ENCODE measurements at regions of chr10 and their contacts with region 1.

Region 1: GRCh38 chr10:117442944-117443685 is 67.9 kb upstream of the PDZD8 start:
- DNase-seq: peak; percentile 74 to 97
- H3K4me3 ChIP-seq: peak overlapping the region in 1 of 2 donors; percentile 2
- H3K27ac ChIP-seq: peak overlapping the region; percentile 84
- H3K4me1 ChIP-seq: peaks cover 0 to 20% of the 10 kb centered on the region in 2 donors
- H3K27me3 ChIP-seq: no peaks in the 10 kb centered on the region
- CTCF ChIP-seq: peak; percentile 84 to 93 (median 89)

Region 2: DNA sequence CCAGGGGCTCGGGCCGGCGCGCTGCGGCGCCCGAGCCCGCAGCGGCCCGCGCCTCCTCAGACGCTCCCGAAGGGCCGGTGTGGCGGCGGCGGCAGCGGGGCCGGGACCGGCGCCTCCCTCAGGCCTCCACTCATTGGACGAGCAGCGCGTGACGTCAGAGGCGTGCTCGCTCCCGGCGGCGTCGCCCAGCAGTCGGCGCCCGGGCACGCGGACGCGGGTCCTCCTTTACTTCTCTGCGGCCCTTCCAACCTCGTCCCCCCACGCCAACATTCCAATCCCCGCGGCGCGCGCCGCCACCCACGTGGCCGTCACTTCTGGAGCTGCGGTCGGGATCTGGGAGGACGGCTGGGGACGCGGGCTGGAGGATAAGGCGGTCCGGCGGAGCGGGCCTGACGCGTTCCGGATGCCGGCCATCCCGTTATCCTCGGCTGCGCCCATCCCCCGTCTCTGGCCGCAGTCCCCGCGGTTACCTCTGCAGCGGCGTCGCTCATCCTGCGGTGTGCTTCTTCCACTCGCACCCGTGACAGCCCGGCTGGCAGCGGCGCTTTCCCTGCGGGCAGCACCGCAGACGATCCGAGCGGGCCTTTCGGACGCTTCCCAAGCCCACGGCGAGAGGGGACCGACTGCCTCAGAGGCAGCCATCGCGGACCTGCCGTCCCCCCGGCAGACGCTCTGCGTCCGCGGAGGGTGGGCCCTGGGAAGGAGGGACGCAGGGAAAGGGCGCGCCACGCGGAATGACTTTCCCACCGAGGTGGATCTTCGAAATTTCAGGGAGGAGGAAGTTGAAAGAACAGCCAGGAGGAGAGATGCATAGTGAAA is 67.5 kb before region 1 on chr10 and contains the start of gene PDZD8:
- intact Hi-C with region 1: loop called (anchors 1 kb)
- DNase-seq: peak; percentile 68 to 96
- H3K4me3 ChIP-seq: peak within 1 kb of the TSS; percentile 92 to 96
- H3K27ac ChIP-seq: peak within 1 kb of the TSS; percentile 96 to 97
- H3K4me1 ChIP-seq: peaks cover 0 to 13% of the 10 kb centered on the region in 2 donors
- H3K27me3 ChIP-seq: no peaks in the 10 kb centered on the region
- CTCF ChIP-seq: no peak
- total RNA-seq, gene PDZD8: 21.0 TPM

Region 3: GRCh38 chr10:117477961-117478670 is 35.0 kb after region 1 on chr10:
- intact Hi-C with region 1: loop called (anchors 2 kb)
- DNase-seq: no peak
- H3K4me3 ChIP-seq: no peak overlapping the region
- H3K27ac ChIP-seq: peak overlapping the region; percentile 55 to 82
- H3K4me1 ChIP-seq: peaks cover 0 to 10% of the 10 kb centered on the region in 2 donors
- H3K27me3 ChIP-seq: no peaks in the 10 kb centered on the region
- CTCF ChIP-seq: peak in 1 of 3 experiments; percentile 7

Region 4: GRCh38 chr10:117541909-117542705 is 99.0 kb after region 1 on chr10:
- intact Hi-C with region 1: loop called (anchors 2 kb)
- DNase-seq: no peak
- H3K4me3 ChIP-seq: peak overlapping the region; percentile 5 to 46
- H3K27ac ChIP-seq: no peak overlapping the region
- H3K4me1 ChIP-seq: peaks cover 6 to 22% of the 10 kb centered on the region in 2 donors
- H3K27me3 ChIP-seq: peaks cover 47% of the 10 kb centered on the region
- CTCF ChIP-seq: no peak

Region 5: DNA sequence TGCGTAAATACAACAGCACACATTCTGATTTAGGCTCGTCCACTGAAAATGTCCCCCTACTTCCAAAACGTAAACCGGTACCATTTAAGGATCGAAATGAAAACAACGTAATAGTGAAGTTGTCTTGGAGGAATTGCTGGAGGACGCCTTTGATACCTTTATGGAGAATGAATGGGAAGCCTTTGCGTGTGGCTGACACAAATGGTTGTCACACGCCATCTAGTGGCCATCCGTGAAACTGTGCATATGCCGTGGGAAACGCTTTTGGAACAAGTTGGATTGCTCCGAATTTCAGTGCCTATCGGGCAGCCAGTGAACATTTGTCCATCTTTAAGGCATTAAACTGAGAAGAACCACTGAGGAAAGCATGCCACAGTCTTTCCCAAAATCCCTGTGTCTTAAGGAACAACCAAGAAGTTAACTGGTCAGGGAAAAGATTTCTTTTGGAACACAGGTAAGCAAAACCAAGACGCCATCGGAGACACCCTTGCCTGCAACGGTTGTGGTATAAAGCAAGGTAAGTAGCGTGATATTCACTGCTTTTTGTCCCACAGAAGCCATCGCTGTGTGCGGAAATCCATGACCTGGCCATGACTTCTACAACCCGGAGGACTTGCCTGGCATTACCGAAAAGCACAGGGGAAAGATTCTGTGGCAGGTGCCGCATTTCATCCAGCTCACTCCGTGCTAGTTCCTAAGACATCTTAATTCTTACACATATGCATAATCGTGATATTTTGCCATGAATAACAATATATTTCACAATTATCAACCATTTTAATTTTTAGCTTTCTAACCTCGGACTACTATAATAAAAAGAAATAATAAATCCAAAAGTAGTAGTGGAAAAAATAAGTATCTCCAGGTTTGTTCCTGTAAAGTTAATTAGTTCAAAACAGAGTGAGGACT is 798.4 kb after region 1 on chr10:
- intact Hi-C with region 1: loop called (anchors 5 kb)
- DNase-seq: peak in 1 of 2 donors; percentile 89
- H3K4me3 ChIP-seq: no peak overlapping the region
- H3K27ac ChIP-seq: no peak overlapping the region
- H3K4me1 ChIP-seq: peaks cover 0 to 3% of the 10 kb centered on the region in 2 donors
- H3K27me3 ChIP-seq: peaks cover under 1% of the 10 kb centered on the region
- CTCF ChIP-seq: peak; percentile 76 to 94 (median 90)